CD14-positive monocyte (primary cell): ENCODE measurements at regions of chr2 and their contacts with region 1.

Region 1: DNA sequence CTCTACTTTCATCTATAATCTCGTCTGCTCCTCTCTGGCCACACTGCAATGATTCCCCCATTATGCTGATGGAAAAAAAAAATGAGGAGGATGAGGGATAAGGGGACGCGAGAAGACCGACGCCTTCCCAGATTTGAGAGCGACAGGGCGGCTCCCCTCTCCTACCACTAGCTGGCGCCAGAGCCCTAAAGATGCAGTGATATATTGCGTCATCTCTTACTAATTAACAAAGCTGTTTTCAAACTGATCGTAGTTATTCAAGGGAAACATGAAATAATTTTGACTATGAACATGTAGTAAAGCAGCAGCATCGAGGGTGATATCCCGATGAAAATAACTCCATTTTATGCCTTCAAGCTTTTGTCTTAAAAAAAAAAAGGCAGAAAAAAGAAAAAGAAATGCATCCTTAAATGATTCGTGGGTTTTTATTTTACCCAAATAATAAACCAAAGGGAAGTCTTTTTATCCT is 48.0 kb upstream of the HNRNPA3 start:
- DNase-seq: peak; percentile 67 to 82 (median 77)
- H3K4me3 ChIP-seq: peak overlapping the region; percentile 58 to 98 (median 79)
- H3K4me3 Mint-ChIP-seq: no peak overlapping the region
- H3K27ac ChIP-seq: peak overlapping the region in 1 of 2 donors; percentile 86
- H3K27ac Mint-ChIP-seq: no peak overlapping the region
- H3K4me1 ChIP-seq: peaks cover 19% of the 10 kb centered on the region in 2 donors
- H3K4me1 Mint-ChIP-seq: peaks cover 18% of the 10 kb centered on the region
- H3K27me3 ChIP-seq: peaks cover 2% of the 10 kb centered on the region in 2 donors
- H3K27me3 Mint-ChIP-seq: no peaks in the 10 kb centered on the region
- CTCF ChIP-seq: peak; percentile 100

Region 2: DNA sequence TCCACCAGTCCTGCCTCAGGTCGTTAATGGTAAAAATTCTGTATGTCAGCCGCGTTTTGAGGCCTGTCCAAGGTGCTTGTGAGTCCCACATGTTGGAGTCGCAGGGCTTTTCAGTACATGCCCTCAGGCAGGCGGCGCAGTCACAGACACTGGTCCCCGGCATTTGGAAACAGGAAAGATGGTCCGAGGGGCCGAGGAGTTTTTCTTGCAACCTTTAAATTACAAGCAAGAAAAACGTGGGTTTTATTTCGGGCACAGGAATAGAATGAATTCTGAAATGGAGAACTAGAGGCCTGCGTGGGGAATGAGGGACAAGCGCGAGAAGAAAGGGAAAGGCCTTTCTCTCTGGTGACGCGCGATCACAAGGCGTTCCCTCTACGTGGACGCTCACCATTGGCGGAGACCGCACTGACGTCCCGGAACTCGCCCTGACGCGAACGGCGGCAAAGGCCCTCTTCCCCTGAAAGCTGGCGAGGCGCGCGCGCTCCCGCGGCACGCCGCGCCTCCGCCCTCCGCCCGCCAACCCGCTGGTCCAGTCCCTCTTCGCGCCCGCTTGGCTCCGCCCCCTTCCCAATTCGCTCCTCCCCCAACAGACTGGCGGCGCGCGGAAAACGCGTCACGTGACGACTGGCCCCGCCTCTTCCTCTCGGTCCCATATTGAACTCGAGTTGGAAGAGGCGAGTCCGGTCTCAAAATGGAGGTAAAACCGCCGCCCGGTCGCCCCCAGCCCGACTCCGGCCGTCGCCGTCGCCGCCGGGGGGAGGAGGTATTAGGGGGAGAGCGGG is 47.7 kb after region 1 on chr2 and contains the start of gene HNRNPA3:
- intact Hi-C with region 1: loop called in 1 of 2 experiments (anchors 5 kb)
- DNase-seq: peak; percentile 98 to 100 (median 100)
- H3K4me3 ChIP-seq: peak within 1 kb of the TSS; percentile 64 to 100 (median 96)
- H3K4me3 Mint-ChIP-seq: peak within 1 kb of the TSS; percentile 88 to 94
- H3K27ac ChIP-seq: peak within 1 kb of the TSS; percentile 99 to 100
- H3K27ac Mint-ChIP-seq: peak within 1 kb of the TSS; percentile 99 to 100 (median 100)
- H3K4me1 ChIP-seq: peaks cover 22 to 28% of the 10 kb centered on the region in 2 donors
- H3K4me1 Mint-ChIP-seq: peaks cover 38% of the 10 kb centered on the region
- H3K27me3 ChIP-seq: no peaks in the 10 kb centered on the region
- H3K27me3 Mint-ChIP-seq: no peaks in the 10 kb centered on the region
- CTCF ChIP-seq: no peak
- polyA plus RNA-seq, gene HNRNPA3: 26.5 to 71.7 (median 43.0) TPM

Region 3: GRCh38 chr2:177296040-177296439 is 131.4 kb after region 1 on chr2:
- intact Hi-C with region 1: loop called in 1 of 2 experiments (anchors 10 kb)
- DNase-seq: peak; percentile 10 to 57 (median 37)
- H3K4me3 ChIP-seq: no peak overlapping the region
- H3K4me3 Mint-ChIP-seq: no peak overlapping the region
- H3K27ac ChIP-seq: no peak overlapping the region
- H3K27ac Mint-ChIP-seq: no peak overlapping the region
- H3K4me1 ChIP-seq: no peaks in the 10 kb centered on the region
- H3K4me1 Mint-ChIP-seq: peaks cover 6% of the 10 kb centered on the region
- H3K27me3 ChIP-seq: no peaks in the 10 kb centered on the region
- H3K27me3 Mint-ChIP-seq: no peaks in the 10 kb centered on the region
- CTCF ChIP-seq: peak; percentile 51

Region 4: GRCh38 chr2:177332041-177332991 is 167.7 kb after region 1 on chr2:
- intact Hi-C with region 1: loop called (anchors 5 kb)
- DNase-seq: peak; percentile 67 to 78 (median 75)
- H3K4me3 ChIP-seq: peak overlapping the region; percentile 9 to 64 (median 41)
- H3K4me3 Mint-ChIP-seq: peak overlapping the region; percentile 67 to 72
- H3K27ac ChIP-seq: peak overlapping the region in 1 of 2 donors; percentile 67
- H3K27ac Mint-ChIP-seq: peak overlapping the region in 6 of 7 donors; percentile 13 to 75 (median 42)
- H3K4me1 ChIP-seq: peaks cover 4 to 5% of the 10 kb centered on the region in 2 donors
- H3K4me1 Mint-ChIP-seq: peaks cover 13% of the 10 kb centered on the region
- H3K27me3 ChIP-seq: no peaks in the 10 kb centered on the region
- H3K27me3 Mint-ChIP-seq: no peaks in the 10 kb centered on the region
- CTCF ChIP-seq: peak; percentile 68

Region 5: GRCh38 chr2:177419274-177419673 is 254.7 kb after region 1 on chr2:
- intact Hi-C with region 1: loop called (anchors 2 to 5 kb)
- DNase-seq: no peak
- H3K4me3 ChIP-seq: no peak overlapping the region
- H3K4me3 Mint-ChIP-seq: no peak overlapping the region
- H3K27ac ChIP-seq: peak overlapping the region in 1 of 2 donors; percentile 6
- H3K27ac Mint-ChIP-seq: no peak overlapping the region
- H3K4me1 ChIP-seq: no peaks in the 10 kb centered on the region
- H3K4me1 Mint-ChIP-seq: peaks cover 5% of the 10 kb centered on the region
- H3K27me3 ChIP-seq: no peaks in the 10 kb centered on the region
- H3K27me3 Mint-ChIP-seq: no peaks in the 10 kb centered on the region
- CTCF ChIP-seq: no peak

Region 6: DNA sequence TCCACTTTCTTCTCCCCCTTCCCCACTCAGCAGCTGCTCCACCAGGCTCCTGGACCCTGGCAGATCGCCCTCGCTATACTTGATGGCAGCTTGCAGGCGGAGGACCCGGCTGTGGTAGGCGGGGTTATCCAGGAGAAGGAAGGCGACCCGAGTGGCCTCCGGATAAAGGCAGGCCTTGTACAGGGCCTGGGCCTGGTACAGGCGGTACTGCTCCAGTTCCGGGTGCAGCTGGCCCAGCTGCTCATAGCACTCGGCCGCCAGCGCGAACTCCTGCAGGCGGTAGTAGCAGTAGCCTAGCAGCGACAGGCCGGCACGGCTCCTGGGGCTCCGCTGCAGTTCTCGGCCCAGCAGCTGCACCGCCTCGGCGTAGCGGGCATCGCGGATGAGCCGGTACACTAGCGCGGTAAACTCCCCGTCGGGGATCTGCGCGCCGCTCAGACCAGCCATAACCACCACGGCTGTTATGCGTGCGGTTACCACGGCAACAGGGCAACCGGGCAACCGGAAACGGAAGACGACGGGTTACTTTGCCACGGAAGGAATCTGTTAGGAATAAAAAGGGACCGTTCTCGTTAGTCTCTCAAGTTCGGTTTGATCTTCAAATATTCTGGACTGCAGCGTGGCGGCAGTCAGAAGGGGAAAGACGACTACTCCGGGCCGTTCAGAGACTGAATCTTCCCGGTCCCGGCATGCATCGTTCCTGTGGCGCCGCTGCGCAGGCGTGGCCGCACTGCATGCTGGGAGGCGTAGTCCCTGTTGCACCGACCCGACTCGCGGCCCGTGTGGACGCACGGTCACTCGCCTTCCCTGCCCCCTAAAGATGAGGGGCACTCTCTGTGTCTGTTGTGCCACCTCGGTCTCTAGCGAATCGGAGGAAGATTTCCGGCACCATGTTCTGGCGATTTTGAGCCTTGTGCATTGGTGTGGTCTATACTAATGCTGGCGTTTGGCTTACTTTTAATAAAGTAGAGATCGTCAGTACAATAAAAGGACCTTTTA is 453.9 kb after region 1 on chr2:
- intact Hi-C with region 1: loop called in 1 of 2 experiments (anchors 10 kb)
- DNase-seq: peak; percentile 85 to 87 (median 86)
- H3K4me3 ChIP-seq: peak overlapping the region; percentile 67 to 99 (median 86)
- H3K4me3 Mint-ChIP-seq: peak overlapping the region; percentile 84 to 97
- H3K27ac ChIP-seq: peak overlapping the region; percentile 73 to 98
- H3K27ac Mint-ChIP-seq: peak overlapping the region; percentile 97 to 100 (median 99)
- H3K4me1 ChIP-seq: peaks cover 10 to 12% of the 10 kb centered on the region in 2 donors
- H3K4me1 Mint-ChIP-seq: peaks cover 3% of the 10 kb centered on the region
- H3K27me3 ChIP-seq: no peaks in the 10 kb centered on the region
- H3K27me3 Mint-ChIP-seq: peaks cover 0 to 4% (median 0%) of the 10 kb centered on the region in 3 donors
- CTCF ChIP-seq: no peak